ENCODE measurements at regions of chr3 and their contacts with region 1.

Region 1: DNA sequence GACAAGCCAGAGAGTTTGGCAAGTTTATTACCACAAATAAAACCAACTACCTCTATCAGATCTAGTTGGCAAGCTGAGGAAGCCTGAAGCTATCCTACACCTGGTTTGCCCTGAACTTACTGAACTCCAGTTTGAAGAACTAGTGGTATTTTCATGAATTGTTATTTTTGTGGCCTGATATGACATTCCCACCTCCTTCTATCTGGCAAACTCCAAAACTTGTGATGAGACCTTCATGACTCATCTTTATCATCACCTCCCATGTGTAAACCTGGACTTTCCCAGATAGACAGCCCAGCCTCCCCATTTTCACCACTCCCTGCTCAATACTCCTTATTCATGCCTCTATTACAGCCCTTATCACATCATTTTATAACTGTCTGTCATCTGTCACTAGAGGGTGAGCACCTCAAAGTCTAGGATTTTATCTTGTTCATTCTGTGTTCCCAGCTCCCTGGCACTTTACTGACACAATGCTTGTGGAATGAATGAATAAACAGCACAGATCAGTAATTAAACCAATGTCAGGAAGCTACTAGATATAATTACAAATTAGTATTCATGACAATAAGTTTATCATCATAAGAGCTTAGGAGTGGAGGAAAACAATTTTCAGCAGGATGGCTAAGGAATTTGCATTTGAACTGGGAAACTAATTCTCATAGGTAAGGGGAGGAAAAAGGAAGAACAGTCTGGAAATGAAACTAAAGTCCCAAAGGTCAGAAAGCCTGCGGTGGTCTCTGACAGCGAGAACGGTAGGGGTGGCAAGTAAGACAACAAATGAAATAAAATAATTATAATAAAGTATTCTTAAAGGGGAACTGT is 13.2 kb upstream of the TRANK1 start:
- DNase-seq: peak in 2 of 9 experiments; percentile 35 to 46
- ATAC-seq: no peak
- H3K4me3 ChIP-seq: no peak overlapping the region
- H3K4me3 Mint-ChIP-seq: peak overlapping the region; percentile 56
- H3K27ac ChIP-seq: no peak overlapping the region
- H3K27ac Mint-ChIP-seq: peak overlapping the region; percentile 0
- H3K4me1 ChIP-seq: no peaks in the 10 kb centered on the region
- H3K4me1 Mint-ChIP-seq: peaks cover 9% of the 10 kb centered on the region
- H3K27me3 ChIP-seq: no peaks in the 10 kb centered on the region
- H3K27me3 Mint-ChIP-seq: no peaks in the 10 kb centered on the region
- CTCF ChIP-seq: no peak

Region 2: DNA sequence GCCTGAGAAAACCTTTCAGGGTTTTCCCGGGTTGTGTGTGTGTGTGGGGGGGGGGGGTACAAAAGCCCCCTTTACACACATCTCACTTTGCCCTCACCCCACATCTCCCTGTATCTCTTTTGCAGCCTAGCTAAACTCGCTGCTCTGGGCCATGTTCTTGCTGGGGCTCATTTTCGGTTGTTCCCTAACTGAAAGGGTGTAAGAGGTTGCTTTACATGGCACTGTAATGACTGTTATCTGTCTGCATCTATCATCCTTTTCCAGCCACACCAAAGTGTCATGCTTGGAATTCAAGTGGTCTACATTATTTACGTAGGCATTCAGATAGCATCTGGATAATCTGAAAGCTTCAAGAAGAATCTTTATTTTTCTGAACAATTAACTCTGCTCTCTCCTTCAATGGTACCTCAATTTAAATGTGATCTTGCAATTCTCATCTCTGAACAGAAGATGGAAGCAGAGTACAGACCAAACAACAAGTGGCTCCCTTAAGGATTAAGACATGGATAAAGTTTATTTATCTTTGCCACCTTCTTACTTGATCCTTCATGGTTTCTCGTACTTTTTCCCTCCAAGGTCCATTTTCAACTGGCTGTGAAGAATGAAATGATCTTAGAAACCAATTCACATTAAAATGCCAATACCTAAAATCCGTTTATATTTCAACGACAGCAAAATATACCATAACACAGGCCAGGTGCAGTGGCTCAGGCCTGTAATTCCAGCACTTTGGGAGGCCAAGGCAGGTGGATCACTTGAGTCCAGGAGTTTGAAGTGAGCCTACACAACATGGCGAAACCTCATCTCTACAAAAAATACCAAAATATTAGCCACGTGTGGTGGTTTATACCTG is 228.6 kb before region 1 on chr3:
- CTCF ChIA-PET with region 1: interaction called, 13 read pairs
- POLR2A ChIA-PET with region 1: no interaction called
- intact Hi-C with region 1: loop called (anchors 1 kb)
- DNase-seq: peak in 2 of 9 experiments; percentile 45 to 57
- ATAC-seq: peak; percentile 44
- H3K4me3 ChIP-seq: no peak overlapping the region
- H3K4me3 Mint-ChIP-seq: no peak overlapping the region
- H3K27ac ChIP-seq: no peak overlapping the region
- H3K27ac Mint-ChIP-seq: no peak overlapping the region
- H3K4me1 ChIP-seq: no peaks in the 10 kb centered on the region
- H3K4me1 Mint-ChIP-seq: no peaks in the 10 kb centered on the region
- H3K27me3 ChIP-seq: no peaks in the 10 kb centered on the region
- H3K27me3 Mint-ChIP-seq: peaks cover 4% of the 10 kb centered on the region
- CTCF ChIP-seq: peak; percentile 41

Region 3: DNA sequence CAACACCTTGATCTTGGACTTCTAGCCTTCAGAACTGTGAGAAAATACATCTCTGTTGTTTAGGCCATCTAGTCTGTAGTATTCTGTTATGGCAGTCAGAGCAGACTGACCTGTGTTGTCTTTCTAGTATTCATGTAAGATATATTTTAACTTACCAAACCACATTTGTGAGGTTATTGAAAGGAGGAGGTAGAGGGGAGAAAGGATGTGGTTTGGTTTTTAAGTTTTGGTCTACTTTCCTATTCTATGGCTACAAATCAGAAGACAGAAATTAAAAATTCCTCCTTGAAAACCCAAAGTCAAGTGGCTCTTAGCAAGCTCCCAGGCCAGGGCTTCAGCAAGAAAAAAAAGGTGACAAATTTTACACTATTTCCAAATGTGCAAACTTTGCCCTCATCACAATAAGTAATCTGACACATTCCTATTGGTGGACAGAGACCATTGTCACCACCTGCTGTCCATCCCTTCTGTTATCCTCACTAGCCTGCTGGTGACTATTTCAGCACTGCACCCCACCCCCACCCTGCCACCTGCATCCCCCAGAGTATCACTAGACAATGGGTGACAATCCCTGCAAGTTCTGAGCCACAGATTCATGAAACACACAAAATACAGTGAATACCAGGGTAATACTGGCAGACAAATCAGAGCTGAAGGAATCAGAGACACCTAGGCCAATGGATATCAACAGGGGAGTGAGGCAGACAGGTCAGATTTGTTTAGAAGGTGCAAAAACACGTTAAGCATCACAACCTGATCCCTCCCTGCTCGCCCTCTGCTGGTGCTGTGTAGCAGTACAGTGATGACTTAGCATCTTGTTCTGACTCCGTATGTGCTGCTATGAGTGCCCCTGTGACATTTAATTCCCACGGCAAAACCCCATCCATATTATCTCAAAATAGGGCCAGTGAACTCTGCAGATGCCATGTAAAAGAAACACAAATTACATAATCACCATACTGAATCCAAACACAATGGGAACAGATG is 114.7 kb before region 1 on chr3:
- CTCF ChIA-PET with region 1: interaction called, 12 read pairs
- POLR2A ChIA-PET with region 1: no interaction called
- intact Hi-C with region 1: no loop called
- DNase-seq: peak in 8 of 9 experiments; percentile 7 to 69 (median 46)
- ATAC-seq: peak; percentile 88
- H3K4me3 ChIP-seq: no peak overlapping the region
- H3K4me3 Mint-ChIP-seq: peak overlapping the region; percentile 35
- H3K27ac ChIP-seq: peak overlapping the region in 1 of 2 experiments; percentile 33
- H3K27ac Mint-ChIP-seq: peak overlapping the region; percentile 62
- H3K4me1 ChIP-seq: peaks cover 17% of the 10 kb centered on the region
- H3K4me1 Mint-ChIP-seq: peaks cover 23% of the 10 kb centered on the region
- H3K27me3 ChIP-seq: no peaks in the 10 kb centered on the region
- H3K27me3 Mint-ChIP-seq: no peaks in the 10 kb centered on the region
- CTCF ChIP-seq: peak; percentile 73

Region 4: DNA sequence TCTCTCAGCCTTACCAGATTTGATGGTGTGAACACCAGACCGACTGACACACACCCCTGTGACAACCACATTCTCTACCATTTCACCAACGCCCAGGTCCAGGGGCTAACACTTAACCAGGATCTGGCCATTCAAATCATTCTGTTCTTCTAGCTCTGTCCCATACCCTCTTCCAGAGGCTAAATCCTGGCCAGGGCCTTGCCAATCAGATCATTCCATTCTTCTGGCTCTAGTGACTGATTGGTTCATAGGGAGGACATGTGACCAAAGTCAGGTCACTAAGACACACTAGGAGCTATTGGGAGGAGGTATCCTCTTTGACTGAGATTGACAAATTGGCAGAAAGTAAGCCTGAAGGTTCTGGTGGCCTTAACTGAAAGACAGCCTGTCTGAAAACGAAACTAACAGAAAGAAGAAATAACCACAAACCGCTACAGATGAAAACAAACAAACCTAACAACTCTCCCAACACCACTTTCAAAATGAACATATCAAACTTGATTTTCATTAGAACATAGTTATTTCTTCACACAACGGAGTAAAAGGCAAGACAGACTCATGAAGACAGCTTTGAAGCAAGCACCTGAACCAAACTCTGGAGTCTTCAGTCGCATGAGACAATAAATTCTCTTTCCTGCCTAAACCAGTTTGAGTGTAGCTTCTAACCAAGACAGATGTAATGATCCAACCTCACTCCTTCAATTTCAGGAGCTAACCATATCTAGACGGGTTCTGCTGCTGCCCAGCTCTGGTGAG is 81.7 kb before region 1 on chr3:
- CTCF ChIA-PET with region 1: interaction called, 67 read pairs
- POLR2A ChIA-PET with region 1: interaction called, 3 read pairs
- intact Hi-C with region 1: loop called in 1 of 2 experiments (anchors 2 kb)
- DNase-seq: peak in 4 of 9 experiments; percentile 33 to 88 (median 67)
- ATAC-seq: peak; percentile 91
- H3K4me3 ChIP-seq: peak overlapping the region; percentile 5 to 32
- H3K4me3 Mint-ChIP-seq: peak overlapping the region; percentile 73
- H3K27ac ChIP-seq: peak overlapping the region; percentile 77 to 91
- H3K27ac Mint-ChIP-seq: peak overlapping the region; percentile 97
- H3K4me1 ChIP-seq: peaks cover 42% of the 10 kb centered on the region
- H3K4me1 Mint-ChIP-seq: peaks cover 55% of the 10 kb centered on the region
- H3K27me3 ChIP-seq: no peaks in the 10 kb centered on the region
- H3K27me3 Mint-ChIP-seq: no peaks in the 10 kb centered on the region
- CTCF ChIP-seq: no peak

Region 5: GRCh38 chr3:36904641-36905040 is 53.4 kb before region 1 on chr3:
- CTCF ChIA-PET with region 1: interaction called, 16 read pairs
- POLR2A ChIA-PET with region 1: interaction called, 4 read pairs
- intact Hi-C with region 1: loop called in 1 of 2 experiments (anchors 1 kb)
- DNase-seq: no peak
- ATAC-seq: no peak
- H3K4me3 ChIP-seq: no peak overlapping the region
- H3K4me3 Mint-ChIP-seq: no peak overlapping the region
- H3K27ac ChIP-seq: peak overlapping the region in 1 of 2 experiments; percentile 8
- H3K27ac Mint-ChIP-seq: peak overlapping the region; percentile 62
- H3K4me1 ChIP-seq: peaks cover 63% of the 10 kb centered on the region
- H3K4me1 Mint-ChIP-seq: peaks cover 84% of the 10 kb centered on the region
- H3K27me3 ChIP-seq: no peaks in the 10 kb centered on the region
- H3K27me3 Mint-ChIP-seq: no peaks in the 10 kb centered on the region
- CTCF ChIP-seq: no peak

Region 6: DNA sequence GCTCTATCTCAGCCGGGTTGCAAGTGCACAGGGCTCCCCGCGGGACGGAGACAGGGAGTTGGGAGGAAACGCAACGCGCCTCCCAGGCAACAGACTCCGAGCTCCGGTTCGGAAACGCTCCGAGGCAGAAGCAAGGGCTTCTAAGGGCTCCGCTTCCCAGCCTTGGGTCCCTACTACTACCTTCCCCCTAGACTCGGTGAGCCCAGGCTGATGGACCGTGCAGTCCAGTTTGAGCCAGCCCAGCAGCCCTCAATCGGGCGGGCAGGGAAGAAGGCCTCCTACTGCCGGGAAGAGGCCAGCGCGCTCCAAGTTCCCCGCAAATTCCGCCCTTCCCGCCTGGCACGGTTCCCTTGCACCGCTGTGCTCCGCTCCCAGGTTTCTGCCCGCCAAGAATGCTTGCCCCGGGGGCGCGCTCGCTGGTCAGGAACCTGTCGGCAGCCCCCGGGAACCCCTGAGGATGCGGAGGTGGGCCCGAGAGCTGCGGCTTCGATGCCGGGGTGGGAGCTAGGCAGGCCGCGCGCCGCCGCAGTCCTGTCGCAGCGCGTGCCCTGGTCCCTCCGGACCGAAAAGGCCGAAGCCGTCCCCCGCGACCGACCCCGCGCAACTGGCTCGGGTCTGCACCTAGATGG is 13.9 kb before region 1 on chr3:
- CTCF ChIA-PET with region 1: interaction called, 35 read pairs
- POLR2A ChIA-PET with region 1: interaction called, 6 read pairs
- intact Hi-C with region 1: loop called in 1 of 2 experiments (anchors 1 kb)
- DNase-seq: peak in 7 of 9 experiments; percentile 27 to 66 (median 40)
- ATAC-seq: peak; percentile 34
- H3K4me3 ChIP-seq: peak overlapping the region; percentile 79 to 82
- H3K4me3 Mint-ChIP-seq: peak overlapping the region; percentile 83
- H3K27ac ChIP-seq: peak overlapping the region; percentile 22 to 68
- H3K27ac Mint-ChIP-seq: peak overlapping the region; percentile 82
- H3K4me1 ChIP-seq: peaks cover 13% of the 10 kb centered on the region
- H3K4me1 Mint-ChIP-seq: peaks cover 23% of the 10 kb centered on the region
- H3K27me3 ChIP-seq: no peaks in the 10 kb centered on the region
- H3K27me3 Mint-ChIP-seq: no peaks in the 10 kb centered on the region
- CTCF ChIP-seq: no peak

Region 7: GRCh38 chr3:36988356-36988755 is 30.3 kb after region 1 on chr3:
- CTCF ChIA-PET with region 1: interaction called, 11 read pairs
- POLR2A ChIA-PET with region 1: interaction called, 4 read pairs
- intact Hi-C with region 1: no loop called
- DNase-seq: peak in 2 of 9 experiments; percentile 23 to 49
- ATAC-seq: no peak
- H3K4me3 ChIP-seq: no peak overlapping the region
- H3K4me3 Mint-ChIP-seq: peak overlapping the region; percentile 57
- H3K27ac ChIP-seq: peak overlapping the region in 1 of 2 experiments; percentile 13
- H3K27ac Mint-ChIP-seq: peak overlapping the region; percentile 64
- H3K4me1 ChIP-seq: peaks cover 46% of the 10 kb centered on the region
- H3K4me1 Mint-ChIP-seq: peaks cover 38% of the 10 kb centered on the region
- H3K27me3 ChIP-seq: no peaks in the 10 kb centered on the region
- H3K27me3 Mint-ChIP-seq: no peaks in the 10 kb centered on the region
- CTCF ChIP-seq: no peak

Measured in CD8-positive, alpha-beta T cell (primary cell).